PC-9 (cell line): ENCODE measurements at regions of chr19 and their contacts with region 1.

Region 1: GRCh38 chr19:6632002-6632621 is 37.8 kb downstream of the TNFSF14 start:
- DNase-seq: peak; percentile 50 to 60
- H3K4me3 ChIP-seq: no peak overlapping the region
- H3K27ac ChIP-seq: no peak overlapping the region
- H3K4me1 ChIP-seq: no peaks in the 10 kb centered on the region
- H3K27me3 ChIP-seq: no peaks in the 10 kb centered on the region
- CTCF ChIP-seq: peak; percentile 80

Region 2: DNA sequence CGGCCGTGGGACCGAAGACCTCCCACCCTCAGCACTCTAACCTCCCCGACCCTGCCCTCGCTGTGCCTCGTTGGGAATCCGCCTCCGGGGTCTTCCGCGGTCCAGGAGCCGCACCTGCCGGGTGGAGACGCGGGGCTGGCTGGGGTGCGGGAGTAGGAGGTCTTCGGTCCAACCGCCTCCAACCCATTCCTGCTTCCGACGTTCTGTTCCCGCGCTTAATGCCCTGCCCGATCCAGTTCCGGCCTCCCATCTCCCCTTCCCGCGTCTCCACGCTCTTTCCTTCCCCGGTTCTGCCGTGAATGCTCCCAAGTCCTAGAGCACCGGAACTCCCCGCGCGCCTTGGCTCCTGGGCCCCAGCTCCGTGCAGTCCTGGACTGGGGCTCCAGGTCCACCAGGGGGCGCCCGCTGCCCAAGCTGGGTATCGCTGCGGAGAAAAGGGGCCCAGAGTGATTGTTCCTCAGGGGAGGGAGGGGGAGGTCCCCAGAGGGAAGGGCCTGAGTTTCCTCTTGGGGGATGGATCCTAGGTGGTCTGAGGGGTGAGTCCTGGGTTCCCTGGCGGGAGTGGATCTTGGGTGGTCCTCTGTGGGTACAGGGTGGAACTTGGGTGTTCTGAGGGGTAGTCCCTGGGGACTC is 115.3 kb before region 1 on chr19:
- CTCF ChIA-PET with region 1: interaction called, 3 read pairs
- POLR2A ChIA-PET with region 1: no interaction called
- intact Hi-C with region 1: loop called (anchors 1 kb)
- DNase-seq: peak; percentile 43 to 76
- H3K4me3 ChIP-seq: peak overlapping the region; percentile 57
- H3K27ac ChIP-seq: no peak overlapping the region
- H3K4me1 ChIP-seq: no peaks in the 10 kb centered on the region
- H3K27me3 ChIP-seq: no peaks in the 10 kb centered on the region
- CTCF ChIP-seq: peak; percentile 93